Caco-2 (cell line): ENCODE measurements at regions of chr1 and their contacts with region 1.

Region 1: GRCh38 chr1:186841599-186841998 is 12.8 kb downstream of the PLA2G4A start:
- DNase-seq: peak in 1 of 2 experiments; percentile 28
- H3K4me3 ChIP-seq: no peak overlapping the region
- H3K4me3 Mint-ChIP-seq: no peak overlapping the region
- H3K27ac Mint-ChIP-seq: no peak overlapping the region
- H3K4me1 ChIP-seq: peaks cover 6% of the 10 kb centered on the region; the same call in 1 of the 2 replicates
- H3K4me1 Mint-ChIP-seq: peaks cover 14% of the 10 kb centered on the region
- H3K27me3 ChIP-seq: no peaks in the 10 kb centered on the region
- H3K27me3 Mint-ChIP-seq: no peaks in the 10 kb centered on the region
- CTCF ChIP-seq: no peak

Region 2: GRCh38 chr1:186750266-186750665 is 91.3 kb before region 1 on chr1:
- CTCF ChIA-PET with region 1: no interaction called
- POLR2A ChIA-PET with region 1: no interaction called
- intact Hi-C with region 1: no loop called
- DNase-seq: no peak
- H3K4me3 ChIP-seq: no peak overlapping the region
- H3K4me3 Mint-ChIP-seq: no peak overlapping the region
- H3K27ac Mint-ChIP-seq: no peak overlapping the region
- H3K4me1 ChIP-seq: no peaks in the 10 kb centered on the region
- H3K4me1 Mint-ChIP-seq: no peaks in the 10 kb centered on the region
- H3K27me3 ChIP-seq: no peaks in the 10 kb centered on the region
- H3K27me3 Mint-ChIP-seq: no peaks in the 10 kb centered on the region
- CTCF ChIP-seq: no peak

Region 3: DNA sequence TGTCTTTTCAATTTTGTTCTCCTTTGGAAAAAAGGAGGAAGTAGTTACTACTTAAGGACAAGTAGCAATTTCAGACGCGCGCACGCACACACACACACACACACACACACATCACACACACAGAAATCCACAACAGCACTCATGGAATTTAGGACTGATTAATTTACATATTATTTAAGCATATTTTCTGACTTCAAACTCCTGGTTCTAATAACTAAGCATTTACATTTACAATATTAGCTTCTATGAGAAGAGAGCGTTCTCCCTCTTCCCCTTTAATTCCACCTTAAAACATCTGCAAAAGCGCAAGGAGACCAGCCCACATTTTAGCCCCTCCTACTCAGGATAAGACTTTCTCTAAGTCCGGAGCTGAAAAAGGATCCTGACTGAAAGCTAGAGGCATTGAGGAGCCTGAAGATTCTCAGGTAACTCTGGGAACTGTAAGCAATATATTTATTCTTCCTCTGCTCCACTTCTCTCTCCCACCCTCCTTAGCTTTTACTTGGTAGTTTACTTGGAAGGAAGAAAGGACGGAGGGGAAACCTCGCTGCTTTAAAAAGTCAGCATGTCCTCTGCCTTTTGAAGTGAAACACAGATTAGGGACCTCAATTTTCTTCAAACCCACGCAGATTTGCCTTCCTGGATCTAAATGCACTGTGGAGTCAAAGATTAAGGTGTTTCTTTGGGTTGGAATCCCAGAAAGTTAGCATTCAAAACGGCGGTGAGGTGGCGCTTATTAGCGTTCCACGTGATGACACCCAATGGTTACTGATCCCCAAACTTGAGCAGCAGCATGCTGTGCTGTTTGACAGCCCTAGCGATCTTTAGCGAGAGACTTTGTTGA is 12.8 kb before region 1 on chr1 and contains the start of gene PLA2G4A:
- CTCF ChIA-PET with region 1: no interaction called
- POLR2A ChIA-PET with region 1: no interaction called
- intact Hi-C with region 1: loop called (anchors 1 kb)
- DNase-seq: peak; percentile 40 to 44
- H3K4me3 ChIP-seq: peak within 1 kb of the TSS; percentile 46
- H3K4me3 Mint-ChIP-seq: peak within 1 kb of the TSS; percentile 89
- H3K27ac Mint-ChIP-seq: no peak within 1 kb of the TSS
- H3K4me1 ChIP-seq: no peaks in the 10 kb centered on the region
- H3K4me1 Mint-ChIP-seq: peaks cover 6% of the 10 kb centered on the region
- H3K27me3 ChIP-seq: no peaks in the 10 kb centered on the region
- H3K27me3 Mint-ChIP-seq: peaks cover 8% of the 10 kb centered on the region
- CTCF ChIP-seq: no peak
- total RNA-seq, gene PLA2G4A: 2.0 and 3.4 TPM in 2 replicates

Region 4: DNA sequence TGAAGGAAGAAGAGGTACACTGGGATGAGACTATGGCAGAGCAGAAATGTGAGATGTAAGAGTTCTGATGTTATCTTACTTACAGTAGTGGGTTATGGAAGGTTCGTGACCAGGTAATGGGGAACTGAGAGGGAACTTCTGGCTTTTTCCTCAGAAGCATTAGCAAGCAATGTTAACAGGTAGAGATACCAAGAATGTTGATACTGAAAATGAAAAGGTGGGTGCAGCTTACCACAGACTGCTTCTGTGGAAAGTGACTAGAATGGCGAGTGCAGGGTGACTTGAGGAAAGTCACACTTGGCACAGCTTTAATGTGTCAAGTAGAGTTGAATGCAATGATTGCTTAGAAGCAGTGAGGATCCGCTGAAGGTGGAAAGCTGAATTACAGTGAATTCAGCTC is 58.0 kb after region 1 on chr1:
- CTCF ChIA-PET with region 1: no interaction called
- POLR2A ChIA-PET with region 1: no interaction called
- intact Hi-C with region 1: no loop called
- DNase-seq: no peak
- H3K4me3 ChIP-seq: no peak overlapping the region
- H3K4me3 Mint-ChIP-seq: no peak overlapping the region
- H3K27ac Mint-ChIP-seq: no peak overlapping the region
- H3K4me1 ChIP-seq: peaks cover 10% of the 10 kb centered on the region; the same call in 1 of the 2 replicates
- H3K4me1 Mint-ChIP-seq: peaks cover 7% of the 10 kb centered on the region
- H3K27me3 ChIP-seq: no peaks in the 10 kb centered on the region
- H3K27me3 Mint-ChIP-seq: no peaks in the 10 kb centered on the region
- CTCF ChIP-seq: no peak